Activated naive CD4-positive, alpha-beta T cell treated with anti-CD3 and anti-CD28 coated beads for 36 hours (primary cell): ENCODE measurements at regions of chr2 and their contacts with region 1.

Region 1: GRCh38 chr2:213806125-213806726 is 522.0 kb downstream of the SPAG16 start:
- DNase-seq: no peak
- H3K4me3 Mint-ChIP-seq: no peak overlapping the region
- H3K27ac Mint-ChIP-seq: no peak overlapping the region
- H3K4me1 Mint-ChIP-seq: no peaks in the 10 kb centered on the region
- H3K27me3 Mint-ChIP-seq: no peaks in the 10 kb centered on the region

Region 2: DNA sequence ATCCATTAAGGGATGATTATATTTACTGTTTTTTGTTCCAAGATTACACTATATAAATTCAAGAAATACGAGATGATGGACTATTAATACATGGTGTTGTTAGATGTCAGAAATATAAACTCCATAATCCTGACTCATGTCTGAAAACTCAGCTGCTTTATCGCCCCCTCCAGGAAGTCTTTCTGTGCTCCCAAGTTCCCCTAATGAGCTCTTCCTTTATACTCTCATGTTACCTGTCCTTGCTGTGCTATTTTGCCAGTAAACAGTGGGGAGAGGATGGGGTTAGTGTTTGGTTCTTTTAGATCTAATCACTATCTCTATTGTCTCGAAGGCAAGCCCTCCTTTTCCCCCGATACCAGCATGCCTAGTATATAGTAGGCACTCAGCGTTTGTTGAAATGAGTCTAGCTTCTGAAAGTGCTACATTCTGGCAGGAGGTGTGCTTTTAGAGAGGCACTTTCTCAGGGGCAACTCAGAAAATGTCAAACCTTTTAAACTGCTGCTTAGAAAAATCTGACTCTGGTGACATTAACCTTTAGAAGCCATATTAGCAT is 1024.6 kb after region 1 on chr2:
- CTCF ChIA-PET with region 1: no interaction called
- intact Hi-C with region 1: loop called (anchors 10 kb)
- DNase-seq: peak; percentile 17
- H3K4me3 Mint-ChIP-seq: no peak overlapping the region
- H3K27ac Mint-ChIP-seq: no peak overlapping the region
- H3K4me1 Mint-ChIP-seq: no peaks in the 10 kb centered on the region
- H3K27me3 Mint-ChIP-seq: no peaks in the 10 kb centered on the region

Region 3: DNA sequence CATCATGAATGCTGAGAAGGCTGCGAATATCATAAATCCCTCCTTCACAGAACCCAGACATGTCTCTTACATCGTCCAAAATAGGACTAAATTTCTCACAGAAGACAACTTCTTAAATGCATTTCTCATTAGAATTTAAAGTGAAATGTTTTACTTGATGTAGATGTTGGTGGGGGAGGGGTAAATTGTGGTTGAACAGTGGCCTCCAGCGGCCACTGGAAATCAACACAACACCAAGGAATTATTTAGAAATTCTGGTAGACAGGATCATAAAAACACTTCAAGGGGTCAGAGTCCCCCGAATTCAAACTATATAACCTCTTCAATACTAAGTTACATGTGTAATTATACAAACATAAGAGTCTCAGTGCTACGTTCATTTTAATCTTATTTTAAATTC is 1196.3 kb after region 1 on chr2:
- CTCF ChIA-PET with region 1: no interaction called
- intact Hi-C with region 1: loop called (anchors 1 kb)
- DNase-seq: peak; percentile 10
- H3K4me3 Mint-ChIP-seq: no peak overlapping the region
- H3K27ac Mint-ChIP-seq: no peak overlapping the region
- H3K4me1 Mint-ChIP-seq: no peaks in the 10 kb centered on the region
- H3K27me3 Mint-ChIP-seq: no peaks in the 10 kb centered on the region

Region 4: GRCh38 chr2:215269397-215270119 is 1463.3 kb after region 1 on chr2:
- CTCF ChIA-PET with region 1: no interaction called
- intact Hi-C with region 1: loop called (anchors 1 kb)
- DNase-seq: peak; percentile 69
- H3K4me3 Mint-ChIP-seq: no peak overlapping the region
- H3K27ac Mint-ChIP-seq: no peak overlapping the region
- H3K4me1 Mint-ChIP-seq: peaks cover 3% of the 10 kb centered on the region
- H3K27me3 Mint-ChIP-seq: no peaks in the 10 kb centered on the region